SK-N-SH (cell line): ENCODE measurements at regions of chr14 and their contacts with region 1.

Region 1: GRCh38 chr14:54854181-54854580 is 48.4 kb downstream of the GCH1 start:
- DNase-seq: no peak
- H3K4me3 ChIP-seq: no peak overlapping the region
- H3K27ac ChIP-seq: peak overlapping the region in 1 of 2 experiments; percentile 51; a peak in 1 of 4 replicates
- H3K4me1 ChIP-seq: peaks cover 4 to 9% of the 10 kb centered on the region in 2 experiments; a peak in 3 of 4 replicates
- H3K27me3 ChIP-seq: no peaks in the 10 kb centered on the region
- CTCF ChIP-seq: no peak
- EP300 ChIP-seq: no peak
- RAD21 ChIP-seq: no peak

Region 2: DNA sequence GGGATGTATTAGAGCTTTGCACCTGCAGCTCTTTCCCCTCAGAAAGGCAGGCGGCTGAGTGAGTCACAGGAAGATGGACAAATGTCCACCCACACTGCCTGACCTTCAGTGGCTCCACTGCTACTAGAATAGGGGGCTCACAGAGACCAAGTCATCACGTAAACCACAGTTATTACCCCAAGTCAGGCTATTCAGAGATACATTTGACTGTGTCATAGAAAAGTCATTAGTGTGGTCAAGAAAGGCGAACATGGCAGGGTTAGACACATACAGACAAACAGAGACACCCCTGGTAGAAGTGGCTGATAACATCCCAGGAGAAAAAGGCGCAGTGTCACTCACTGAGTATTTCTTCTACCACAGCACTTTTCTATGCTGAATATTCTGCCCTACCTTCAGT is 12.4 kb after region 1 on chr14:
- CTCF ChIA-PET with region 1: interaction called, 10 read pairs
- POLR2A ChIA-PET with region 1: no interaction called
- DNase-seq: no peak
- H3K4me3 ChIP-seq: no peak overlapping the region
- H3K27ac ChIP-seq: peak overlapping the region in 1 of 2 experiments; percentile 77; a peak in 3 of 4 replicates
- H3K4me1 ChIP-seq: peaks cover 0 to 43% of the 10 kb centered on the region in 2 experiments; a peak in 2 of 4 replicates
- H3K27me3 ChIP-seq: no peaks in the 10 kb centered on the region
- CTCF ChIP-seq: no peak
- EP300 ChIP-seq: no peak
- RAD21 ChIP-seq: no peak

Region 3: DNA sequence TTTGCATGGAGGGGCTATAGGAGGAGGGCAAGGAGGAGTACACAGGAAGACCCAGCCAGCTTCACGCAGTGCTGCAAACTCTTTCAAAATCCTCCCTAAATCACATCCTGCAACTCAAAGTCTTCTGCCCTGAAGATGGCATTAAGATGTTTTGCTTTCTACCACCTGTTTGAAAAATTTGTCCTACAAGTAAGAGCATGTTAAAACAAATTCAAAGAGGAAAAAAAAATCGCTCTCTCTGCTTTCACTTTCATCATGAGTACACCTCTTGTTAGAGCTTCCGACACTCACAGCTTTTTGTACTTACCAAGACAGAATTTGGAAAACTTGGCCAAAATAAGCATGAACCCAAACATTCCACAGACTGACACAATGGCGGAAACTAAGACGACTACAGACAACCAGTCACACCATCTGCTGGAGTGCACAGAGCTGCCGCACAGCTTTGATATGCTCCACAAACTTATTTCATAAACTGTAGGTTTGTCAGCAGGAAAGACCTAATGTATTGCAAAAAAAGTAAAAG is 27.1 kb after region 1 on chr14:
- CTCF ChIA-PET with region 1: no interaction called
- POLR2A ChIA-PET with region 1: no interaction called
- DNase-seq: no peak
- H3K4me3 ChIP-seq: peak overlapping the region in 1 of 2 experiments; percentile 16; a peak in 1 of 4 replicates
- H3K27ac ChIP-seq: peak overlapping the region; percentile 23 to 94; a peak in 3 of 4 replicates
- H3K4me1 ChIP-seq: peaks cover 0 to 49% of the 10 kb centered on the region in 2 experiments; a peak in 2 of 4 replicates
- H3K27me3 ChIP-seq: no peaks in the 10 kb centered on the region
- CTCF ChIP-seq: no peak
- EP300 ChIP-seq: no peak
- RAD21 ChIP-seq: no peak